Ascending aorta (tissue), 2 donors: ENCODE measurements at regions of chr5 and their contacts with region 1.

Region 1: GRCh38 chr5:104986327-104986726 is 1423.7 kb upstream of the NUDT12 start:
- DNase-seq: no peak
- H3K4me3 ChIP-seq: no peak overlapping the region
- H3K27ac ChIP-seq: no peak overlapping the region
- H3K4me1 ChIP-seq: no peaks in the 10 kb centered on the region
- H3K27me3 ChIP-seq: no peaks in the 10 kb centered on the region
- CTCF ChIP-seq: no peak

Region 2: DNA sequence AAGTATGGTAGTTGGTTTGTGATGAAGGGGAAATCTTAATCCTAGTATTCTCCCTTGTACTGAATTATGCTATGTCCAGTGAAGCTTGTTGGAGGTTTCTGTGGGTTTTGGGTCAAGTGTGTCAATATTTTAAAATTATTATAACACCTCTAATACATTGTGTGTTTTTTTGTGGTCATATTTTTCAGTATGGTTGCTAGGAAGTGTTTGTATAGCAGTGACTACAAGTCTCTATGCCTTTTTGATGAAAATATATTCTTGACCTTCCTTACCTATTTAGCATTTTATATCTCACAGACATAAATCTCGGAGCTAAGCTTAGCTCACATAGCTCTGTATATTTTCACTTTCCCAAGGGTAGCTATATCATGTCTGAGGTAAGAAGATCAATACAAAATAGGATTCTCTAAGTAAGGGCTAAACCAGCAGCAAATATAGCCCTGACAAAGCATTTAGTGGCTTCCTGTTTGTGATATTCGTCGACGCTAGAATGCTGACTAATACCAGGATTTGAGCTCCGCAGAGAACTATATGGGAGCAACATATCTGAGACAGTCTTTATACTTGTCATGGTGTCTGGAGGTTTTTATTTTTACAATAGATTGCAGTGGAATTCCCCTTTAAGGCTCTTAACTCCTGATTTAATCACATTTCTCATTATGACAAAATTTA is 1645.5 kb before region 1 on chr5:
- intact Hi-C with region 1: loop called (anchors 10 kb)
- DNase-seq: no peak
- H3K4me3 ChIP-seq: no peak overlapping the region
- H3K27ac ChIP-seq: no peak overlapping the region
- H3K4me1 ChIP-seq: no peaks in the 10 kb centered on the region
- H3K27me3 ChIP-seq: no peaks in the 10 kb centered on the region
- CTCF ChIP-seq: no peak

Region 3: DNA sequence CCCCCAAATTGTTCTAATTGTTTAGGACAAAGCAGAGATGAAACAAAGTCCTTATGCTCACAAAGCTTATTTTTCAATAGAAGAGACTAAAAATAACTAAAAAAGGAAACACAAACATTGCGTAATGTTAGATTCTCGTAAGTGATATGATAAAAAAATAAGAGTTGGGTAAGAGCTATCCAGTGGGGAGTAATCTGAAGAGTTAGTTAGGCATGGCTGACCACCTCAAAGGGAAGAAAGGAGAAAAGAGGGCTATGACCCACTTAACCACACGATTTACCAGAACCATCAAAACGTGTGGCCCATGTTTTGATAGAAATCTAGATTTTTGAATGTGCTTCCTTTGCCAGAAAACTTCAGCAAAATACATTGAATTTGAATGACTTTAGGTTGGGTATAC is 126.9 kb before region 1 on chr5:
- intact Hi-C with region 1: no loop called
- DNase-seq: no peak
- H3K4me3 ChIP-seq: no peak overlapping the region
- H3K27ac ChIP-seq: no peak overlapping the region
- H3K4me1 ChIP-seq: no peaks in the 10 kb centered on the region
- H3K27me3 ChIP-seq: no peaks in the 10 kb centered on the region
- CTCF ChIP-seq: no peak